WTC11 (cell line): ENCODE measurements at regions of chr1 and their contacts with region 1.

Region 1: DNA sequence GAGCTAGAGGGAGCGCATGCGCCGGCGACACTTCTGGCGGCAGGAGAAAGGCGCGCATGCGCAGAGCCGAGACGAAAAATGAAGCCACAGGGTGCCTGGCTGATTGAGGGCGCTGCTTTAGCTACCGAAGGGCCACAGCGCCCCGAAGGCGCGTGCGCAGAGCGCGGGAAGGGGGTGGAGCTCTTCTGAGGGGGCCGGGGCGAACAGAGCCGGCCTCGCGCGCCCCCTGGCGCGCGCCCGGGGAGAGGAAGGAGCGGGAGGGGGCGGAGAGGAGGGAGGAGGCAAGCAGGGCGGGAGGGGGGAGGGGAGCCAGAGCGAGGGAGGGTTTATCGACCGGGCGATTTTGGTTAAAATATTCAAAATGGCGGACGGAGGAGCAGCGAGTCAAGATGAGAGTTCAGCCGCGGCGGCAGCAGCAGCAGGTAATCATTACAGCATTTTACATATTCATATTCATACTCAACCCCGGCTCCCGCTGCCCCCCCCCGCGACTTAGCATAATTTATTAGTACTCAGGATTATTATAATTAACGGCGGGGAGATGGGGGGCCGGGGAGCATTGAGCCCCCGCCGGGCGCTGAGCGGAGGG is at the start of gene POU2F1:
- DNase-seq: peak; percentile 98
- ATAC-seq: peak; percentile 73
- H3K4me3 Mint-ChIP-seq: peak within 1 kb of the TSS; percentile 93
- H3K27ac Mint-ChIP-seq: peak within 1 kb of the TSS; percentile 100
- H3K4me1 Mint-ChIP-seq: peaks cover 50% of the 10 kb centered on the region
- H3K27me3 Mint-ChIP-seq: peaks cover 6% of the 10 kb centered on the region; the same call in 1 of the 2 replicates
- CTCF ChIP-seq: peak; percentile 31; the same call in 1 of the 2 replicates
- total RNA-seq, gene POU2F1: 51.0 to 55.0 TPM (median 51.3 TPM) in 3 replicates

Region 2: GRCh38 chr1:166910396-166910994 is 310.1 kb before region 1 on chr1:
- CTCF ChIA-PET with region 1: interaction called, 25 read pairs
- POLR2A ChIA-PET with region 1: no interaction called
- DNase-seq: peak; percentile 71
- ATAC-seq: peak; percentile 97
- H3K4me3 Mint-ChIP-seq: no peak overlapping the region
- H3K27ac Mint-ChIP-seq: no peak overlapping the region
- H3K4me1 Mint-ChIP-seq: no peaks in the 10 kb centered on the region
- H3K27me3 Mint-ChIP-seq: peaks cover 2% of the 10 kb centered on the region; the same call in 1 of the 2 replicates
- CTCF ChIP-seq: peak; percentile 59

Region 3: DNA sequence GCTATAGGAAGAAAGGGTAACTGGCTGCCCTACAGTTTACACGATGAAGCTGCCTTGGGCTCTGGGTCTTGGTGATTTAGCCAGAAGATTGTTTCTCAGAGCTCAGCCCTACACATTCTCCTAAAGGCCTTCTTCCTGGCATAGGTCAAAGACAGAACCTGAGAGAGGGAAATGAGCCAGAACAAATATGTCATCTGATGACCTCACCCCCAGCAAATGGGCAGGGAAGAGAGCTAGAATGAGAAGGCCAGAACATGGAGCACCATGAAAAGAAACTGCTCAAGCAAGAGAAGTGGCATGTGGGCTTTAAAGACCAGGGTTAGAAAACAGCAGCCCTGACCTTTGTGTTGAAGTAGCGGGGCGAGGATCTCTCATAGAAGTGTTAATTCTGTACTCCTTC is 239.8 kb before region 1 on chr1:
- CTCF ChIA-PET with region 1: no interaction called
- POLR2A ChIA-PET with region 1: no interaction called
- DNase-seq: no peak
- ATAC-seq: no peak
- H3K4me3 Mint-ChIP-seq: no peak overlapping the region
- H3K27ac Mint-ChIP-seq: no peak overlapping the region
- H3K4me1 Mint-ChIP-seq: peaks cover 2% of the 10 kb centered on the region; the same call in 1 of the 2 replicates
- H3K27me3 Mint-ChIP-seq: peaks cover 46% of the 10 kb centered on the region
- CTCF ChIP-seq: no peak

Region 4: DNA sequence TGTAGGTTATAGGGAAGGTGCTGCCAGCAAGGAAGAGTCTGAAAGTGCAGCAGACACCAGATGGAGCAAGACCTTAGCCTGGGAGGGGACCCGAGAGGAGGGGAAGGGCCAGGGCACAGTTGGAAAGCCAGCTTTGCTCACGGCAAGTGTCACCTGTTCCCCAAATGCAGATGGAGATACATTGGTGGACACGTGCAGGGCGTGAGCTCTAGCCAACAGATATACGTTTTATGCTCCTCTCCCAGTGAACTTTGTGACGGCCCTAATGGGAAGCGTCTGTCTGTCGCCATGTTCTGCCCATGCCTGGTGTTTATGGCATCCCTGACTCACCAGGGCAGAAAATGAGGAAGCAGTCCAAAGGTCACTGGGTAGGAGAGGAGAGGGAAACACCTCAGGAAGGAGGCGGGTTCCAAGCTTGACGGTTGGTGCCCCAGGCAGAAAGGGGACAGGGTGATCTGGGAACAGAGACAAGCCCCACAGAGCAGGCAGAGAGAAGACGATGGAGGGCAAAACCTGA is 138.1 kb before region 1 on chr1:
- CTCF ChIA-PET with region 1: interaction called, 11 read pairs
- POLR2A ChIA-PET with region 1: interaction called, 7 read pairs
- DNase-seq: no peak
- ATAC-seq: no peak
- H3K4me3 Mint-ChIP-seq: no peak overlapping the region
- H3K27ac Mint-ChIP-seq: no peak overlapping the region
- H3K4me1 Mint-ChIP-seq: peaks cover 8% of the 10 kb centered on the region
- H3K27me3 Mint-ChIP-seq: peaks cover 5% of the 10 kb centered on the region
- CTCF ChIP-seq: no peak

Region 5: DNA sequence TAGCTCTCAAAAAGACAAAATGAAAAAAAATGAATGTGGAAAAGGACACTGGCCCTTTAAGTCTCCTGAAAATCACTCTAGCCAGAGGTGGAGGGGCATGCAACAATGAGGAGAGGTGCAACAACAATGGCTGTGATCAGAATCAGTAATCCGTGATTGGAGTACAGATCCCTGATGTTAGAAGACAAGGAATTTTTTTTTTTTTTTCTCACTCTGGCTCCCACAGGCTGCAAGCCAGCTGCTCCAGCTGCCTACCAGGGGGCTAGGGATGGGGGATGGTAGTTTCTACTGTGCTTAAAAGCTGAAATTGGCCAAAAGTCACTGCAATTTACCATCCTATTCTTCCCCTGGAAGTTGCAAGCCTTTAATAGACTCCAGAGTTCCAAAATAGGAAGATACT is 72.2 kb before region 1 on chr1:
- CTCF ChIA-PET with region 1: interaction called, 18 read pairs
- POLR2A ChIA-PET with region 1: no interaction called
- DNase-seq: no peak
- ATAC-seq: peak; percentile 90
- H3K4me3 Mint-ChIP-seq: no peak overlapping the region
- H3K27ac Mint-ChIP-seq: peak overlapping the region; percentile 75
- H3K4me1 Mint-ChIP-seq: peaks cover 27% of the 10 kb centered on the region
- H3K27me3 Mint-ChIP-seq: no peaks in the 10 kb centered on the region; the same call in 1 of the 2 replicates
- CTCF ChIP-seq: no peak

Region 6: DNA sequence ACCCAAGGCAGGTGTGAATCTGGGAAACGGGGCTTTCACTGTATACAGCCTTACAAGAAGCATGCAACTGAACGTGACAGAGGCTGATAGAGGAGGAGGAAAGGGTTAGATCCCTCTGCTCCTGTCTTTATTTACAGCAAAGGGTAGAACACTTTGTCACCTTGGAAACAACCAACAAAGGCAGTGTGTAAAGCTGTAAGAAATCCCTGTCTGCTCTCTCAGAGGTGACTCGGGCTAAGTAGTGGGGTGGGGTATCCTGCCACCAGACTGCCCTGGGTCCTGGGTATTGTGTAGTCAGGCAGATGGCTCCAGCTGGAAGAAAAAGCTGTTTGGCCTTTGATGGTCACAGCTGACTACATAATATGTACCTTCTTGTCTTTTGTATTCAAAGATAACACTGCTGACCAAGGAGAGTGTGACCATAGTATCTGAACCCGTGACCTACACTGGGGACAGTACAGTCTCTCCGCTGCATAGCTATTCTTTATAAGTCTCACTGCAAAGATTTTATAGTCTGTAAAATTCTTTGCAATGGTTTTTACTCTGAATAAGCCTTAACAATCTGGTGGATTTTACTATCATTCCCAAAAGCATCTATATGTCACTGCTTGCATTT is 22.0 kb before region 1 on chr1:
- CTCF ChIA-PET with region 1: interaction called, 14 read pairs
- POLR2A ChIA-PET with region 1: interaction called, 5 read pairs
- DNase-seq: no peak
- ATAC-seq: peak; percentile 66
- H3K4me3 Mint-ChIP-seq: no peak overlapping the region
- H3K27ac Mint-ChIP-seq: no peak overlapping the region
- H3K4me1 Mint-ChIP-seq: peaks cover 30% of the 10 kb centered on the region
- H3K27me3 Mint-ChIP-seq: peaks cover 4% of the 10 kb centered on the region
- CTCF ChIP-seq: no peak

Region 7: GRCh38 chr1:167305706-167306277 is 85.2 kb after region 1 on chr1:
- CTCF ChIA-PET with region 1: no interaction called
- POLR2A ChIA-PET with region 1: no interaction called
- DNase-seq: no peak
- ATAC-seq: no peak
- H3K4me3 Mint-ChIP-seq: no peak overlapping the region
- H3K27ac Mint-ChIP-seq: no peak overlapping the region
- H3K4me1 Mint-ChIP-seq: peaks cover 35% of the 10 kb centered on the region
- H3K27me3 Mint-ChIP-seq: no peaks in the 10 kb centered on the region
- CTCF ChIP-seq: no peak

Region 8: DNA sequence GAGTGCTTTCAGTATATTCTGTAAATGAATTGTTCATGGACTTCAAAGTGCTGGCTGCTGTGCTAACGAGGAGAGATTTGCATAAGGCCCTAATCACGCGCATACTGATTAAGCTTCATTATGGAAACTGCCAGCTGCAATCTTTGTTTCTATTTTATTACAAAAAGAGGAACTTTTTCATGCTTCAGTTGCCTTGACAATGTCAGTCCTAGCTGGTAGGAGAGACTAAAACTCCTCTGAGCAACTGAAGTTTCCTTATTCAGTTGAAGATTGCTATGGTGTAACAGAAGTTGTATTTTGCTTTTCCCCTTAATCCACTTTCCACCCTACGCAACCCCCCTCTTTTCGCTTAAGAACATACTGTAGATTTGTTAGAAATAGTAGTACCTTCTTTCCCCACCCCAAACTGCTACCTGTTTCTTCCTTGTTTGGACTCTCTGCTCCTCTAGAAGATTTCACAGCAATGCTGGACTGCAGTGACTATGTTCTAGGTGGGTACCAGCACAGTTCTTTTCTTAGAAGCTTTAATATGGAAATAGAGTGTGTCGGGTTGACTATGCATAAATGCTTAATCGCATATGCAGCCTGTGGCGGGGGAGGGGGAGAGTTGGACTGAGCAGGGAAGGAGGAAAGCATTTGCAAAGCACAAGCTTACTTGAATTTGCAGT is 108.3 kb after region 1 on chr1:
- CTCF ChIA-PET with region 1: no interaction called
- POLR2A ChIA-PET with region 1: no interaction called
- DNase-seq: peak; percentile 58
- ATAC-seq: peak; percentile 71
- H3K4me3 Mint-ChIP-seq: peak overlapping the region; percentile 58
- H3K27ac Mint-ChIP-seq: peak overlapping the region; percentile 95
- H3K4me1 Mint-ChIP-seq: peaks cover 62% of the 10 kb centered on the region
- H3K27me3 Mint-ChIP-seq: no peaks in the 10 kb centered on the region
- CTCF ChIP-seq: no peak

Region 9: DNA sequence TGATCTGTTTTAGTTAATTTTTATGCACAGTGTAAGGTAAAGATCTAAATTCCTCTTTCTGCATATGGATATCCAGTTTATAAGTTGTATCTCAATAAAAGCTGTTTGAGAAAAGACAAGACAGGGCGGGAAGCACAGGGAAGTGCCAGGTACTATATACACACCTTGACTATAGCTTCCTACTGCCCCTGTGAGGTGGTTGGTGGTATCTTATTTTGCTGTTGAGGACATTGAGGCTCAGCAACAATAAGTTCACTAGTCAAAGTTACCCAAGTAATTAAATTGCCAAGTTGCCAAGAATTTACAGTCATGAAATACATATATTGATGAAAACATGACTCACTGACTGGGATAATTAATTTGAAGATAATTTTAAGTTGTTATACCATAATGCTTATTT is 188.6 kb after region 1 on chr1:
- CTCF ChIA-PET with region 1: interaction called, 16 read pairs
- POLR2A ChIA-PET with region 1: no interaction called
- DNase-seq: no peak
- ATAC-seq: peak; percentile 94
- H3K4me3 Mint-ChIP-seq: no peak overlapping the region
- H3K27ac Mint-ChIP-seq: no peak overlapping the region; the same call in 1 of the 2 replicates
- H3K4me1 Mint-ChIP-seq: 0 out of 2 replicates have a peak, but pooled peaks cover under 1% of the 10 kb centered on the region
- H3K27me3 Mint-ChIP-seq: no peaks in the 10 kb centered on the region
- CTCF ChIP-seq: no peak

Region 10: DNA sequence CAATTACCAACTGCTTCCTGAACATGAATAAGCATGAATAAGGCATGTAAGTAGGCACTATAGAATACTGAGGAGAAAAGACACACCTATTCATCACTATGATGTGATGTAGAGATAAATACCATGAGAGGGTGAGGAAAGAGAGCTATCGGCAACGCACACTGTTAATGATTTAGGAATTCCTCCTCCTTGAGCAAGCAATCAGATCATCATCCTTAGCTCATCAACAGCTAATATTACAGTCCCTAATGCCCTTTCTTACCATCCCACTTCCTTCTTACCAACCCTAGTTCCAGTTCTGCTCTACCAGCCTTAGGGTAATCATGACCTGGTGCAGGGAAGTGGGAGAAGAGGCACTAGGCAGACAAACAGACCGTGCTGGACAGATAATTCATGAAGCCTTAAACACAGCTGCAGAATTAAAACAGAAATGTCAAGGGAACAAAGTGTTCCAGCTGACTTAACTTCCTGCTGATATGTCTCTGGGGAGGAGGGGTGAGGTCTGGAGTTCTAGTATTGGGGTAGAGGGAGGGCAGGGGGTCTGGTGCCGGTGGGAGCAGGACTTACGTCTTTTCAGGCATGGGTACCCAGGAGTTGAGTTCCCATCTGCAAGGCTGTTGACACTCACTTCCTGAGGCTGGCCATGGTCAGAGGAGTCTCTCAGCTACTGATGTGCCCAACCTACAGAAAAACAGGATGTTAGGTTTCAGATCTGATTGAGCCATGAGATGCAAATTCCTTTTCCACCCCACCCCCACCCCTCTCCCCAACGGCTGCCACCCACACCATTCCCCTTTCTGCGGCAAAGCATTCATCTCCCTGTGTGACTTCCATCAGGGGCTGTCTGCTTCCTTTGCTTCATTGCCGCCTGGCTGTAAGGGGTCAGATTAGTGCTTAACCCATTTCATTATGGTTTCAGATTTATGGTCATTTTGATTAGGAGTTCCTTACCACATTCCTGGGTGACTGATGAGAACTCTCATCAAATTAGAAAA is 396.8 kb after region 1 on chr1:
- CTCF ChIA-PET with region 1: no interaction called
- POLR2A ChIA-PET with region 1: no interaction called
- DNase-seq: no peak
- ATAC-seq: peak; percentile 82
- H3K4me3 Mint-ChIP-seq: no peak overlapping the region
- H3K27ac Mint-ChIP-seq: no peak overlapping the region
- H3K4me1 Mint-ChIP-seq: peaks cover 20% of the 10 kb centered on the region
- H3K27me3 Mint-ChIP-seq: peaks cover 6% of the 10 kb centered on the region; the same call in 1 of the 2 replicates
- CTCF ChIP-seq: no peak